Esophagus muscularis mucosa (tissue), 4 donors: ENCODE measurements at regions of chr17 and their contacts with region 1.

Region 1: GRCh38 chr17:16653209-16654041 is at the start of gene ZNF624:
- DNase-seq: peak; percentile 97
- H3K4me3 ChIP-seq: peak within 1 kb of the TSS; percentile 75 to 78 (median 76)
- H3K27ac ChIP-seq: peak within 1 kb of the TSS; percentile 94 to 95 (median 94)
- H3K4me1 ChIP-seq: peaks cover 6 to 21% (median 19%) of the 10 kb centered on the region in 4 donors
- H3K27me3 ChIP-seq: no peaks in the 10 kb centered on the region
- CTCF ChIP-seq: peak in 1 of 3 experiments; percentile 7
- EP300 ChIP-seq: peak; percentile 73
- POLR2A ChIP-seq: no peak
- total RNA-seq, gene ZNF624: 1.2 to 4.5 (median 2.5) TPM

Region 2: GRCh38 chr17:16589097-16589969 is 64.1 kb before region 1 on chr17:
- intact Hi-C with region 1: loop called (anchors 5 kb)
- DNase-seq: peak; percentile 96
- H3K4me3 ChIP-seq: peak overlapping the region; percentile 60 to 74 (median 71)
- H3K27ac ChIP-seq: peak overlapping the region; percentile 76 to 84 (median 80)
- H3K4me1 ChIP-seq: peaks cover 8 to 16% (median 11%) of the 10 kb centered on the region in 4 donors
- H3K27me3 ChIP-seq: no peaks in the 10 kb centered on the region
- CTCF ChIP-seq: peak; percentile 99 to 100 (median 99)
- EP300 ChIP-seq: no peak
- POLR2A ChIP-seq: no peak